Calu3 (cell line): ENCODE measurements at regions of chr4 and their contacts with region 1.

Region 1: DNA sequence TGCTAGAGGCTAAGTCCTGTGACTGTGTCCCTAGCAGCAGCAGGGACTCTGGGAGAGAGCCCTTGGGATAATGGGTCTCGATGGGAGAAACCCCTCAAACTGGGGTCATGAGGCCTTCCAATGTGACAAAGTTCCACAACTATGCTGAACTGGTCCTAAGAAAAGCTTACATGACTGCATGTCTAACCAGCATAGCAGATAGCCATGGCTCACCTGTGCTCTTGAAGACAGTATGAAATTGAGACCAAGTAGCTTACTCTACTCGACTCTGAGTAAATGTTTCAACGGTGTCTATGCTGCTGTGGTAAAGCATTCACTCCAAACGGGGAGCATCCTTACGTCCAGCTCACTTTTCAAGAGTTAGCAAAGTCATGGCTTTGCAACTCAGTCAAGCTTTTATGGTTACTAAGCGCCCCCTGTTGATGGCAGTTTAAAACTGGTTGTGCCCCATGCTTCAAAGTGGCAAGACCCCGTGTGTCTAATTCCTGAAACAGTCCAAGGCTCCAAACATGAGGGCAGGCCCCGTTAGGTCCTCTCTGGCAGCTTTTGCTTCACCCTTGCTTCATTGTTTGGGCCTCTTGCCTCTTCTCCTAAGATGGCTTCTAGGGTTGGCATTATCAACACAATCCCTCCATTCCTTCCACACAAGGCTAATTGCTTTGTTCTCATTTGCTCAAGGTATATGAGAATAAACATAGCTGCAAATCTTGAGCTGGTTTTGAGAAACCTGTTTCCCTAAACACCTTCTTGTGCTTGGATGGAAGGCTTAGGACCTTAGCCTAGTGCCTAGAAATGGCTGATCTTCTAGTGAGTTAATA is 46.6 kb downstream of the CCNG2 start:
- DNase-seq: peak; percentile 67
- H3K4me3 Mint-ChIP-seq: no peak overlapping the region
- H3K27ac Mint-ChIP-seq: no peak overlapping the region
- H3K4me1 Mint-ChIP-seq: peaks cover 18% of the 10 kb centered on the region
- H3K27me3 Mint-ChIP-seq: no peaks in the 10 kb centered on the region
- CTCF ChIP-seq: peak; percentile 36

Region 2: DNA sequence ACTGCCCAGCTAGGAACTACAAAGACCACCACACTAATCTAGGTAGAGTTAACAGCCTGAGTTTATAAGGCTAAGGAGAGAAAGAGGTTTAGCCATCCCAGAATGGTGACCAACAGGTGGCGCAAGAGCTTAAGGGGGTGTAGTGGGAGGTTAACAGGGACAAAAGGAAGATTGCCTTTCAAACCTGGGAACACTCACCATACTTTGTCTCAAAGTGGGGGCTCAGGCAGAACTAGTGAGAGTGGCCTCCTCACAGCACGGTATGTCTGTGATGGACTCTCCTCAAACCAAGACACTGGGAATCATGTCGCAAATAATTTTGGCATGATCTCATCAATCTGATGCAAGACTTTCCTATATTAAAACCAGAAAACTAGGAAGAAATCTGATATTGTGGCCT is 151.2 kb before region 1 on chr4:
- CTCF ChIA-PET with region 1: interaction called, 24 read pairs
- intact Hi-C with region 1: loop called (anchors 1 kb)
- DNase-seq: peak; percentile 71
- H3K4me3 Mint-ChIP-seq: no peak overlapping the region
- H3K27ac Mint-ChIP-seq: no peak overlapping the region
- H3K4me1 Mint-ChIP-seq: no peaks in the 10 kb centered on the region
- H3K27me3 Mint-ChIP-seq: no peaks in the 10 kb centered on the region
- CTCF ChIP-seq: peak; percentile 43

Region 3: DNA sequence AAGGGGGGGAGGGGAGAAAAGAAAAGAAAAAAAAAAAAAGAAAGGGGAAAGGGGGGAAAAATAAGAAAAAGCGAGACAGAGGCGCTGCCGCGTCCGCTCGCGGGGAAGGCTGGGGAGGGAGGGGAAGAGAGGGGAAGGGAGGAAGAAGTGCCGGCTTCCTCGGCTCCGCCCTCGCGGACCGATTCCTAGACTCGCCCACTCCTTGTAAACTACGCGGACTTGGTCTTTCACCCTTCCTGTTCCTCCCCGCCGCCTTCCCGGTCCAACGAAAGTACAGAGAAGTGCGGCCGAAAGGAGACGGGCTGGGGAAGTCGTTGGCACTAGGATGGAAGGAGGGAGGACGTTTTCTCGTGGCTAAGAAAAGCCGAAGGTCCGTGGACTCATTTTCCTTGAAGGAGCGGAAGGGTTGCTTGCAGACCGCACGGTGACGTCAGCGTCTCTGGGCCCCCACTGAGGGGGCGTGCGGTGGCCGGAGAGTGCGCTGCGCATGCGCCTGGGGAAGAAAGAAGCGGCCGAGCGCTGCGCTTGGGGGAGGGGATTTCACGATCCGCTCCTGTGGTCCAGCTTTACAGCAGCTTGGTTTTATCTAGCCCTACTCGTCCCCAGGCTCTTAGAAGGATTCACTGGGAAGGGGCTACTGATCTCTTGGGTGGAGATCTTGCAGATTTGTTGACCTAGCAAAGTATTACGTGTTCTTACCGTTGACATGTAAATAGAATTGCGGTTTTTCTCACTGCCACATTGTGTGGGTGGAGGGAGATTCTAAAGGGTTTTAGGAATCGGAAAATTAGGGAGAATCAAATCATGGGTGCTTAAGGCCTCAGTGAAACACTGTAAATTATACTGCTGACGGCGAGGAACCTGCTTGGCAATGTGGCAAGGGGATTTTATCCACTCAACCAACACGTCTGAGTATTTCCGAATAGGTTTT is 127.5 kb before region 1 on chr4 and contains the start of gene CCNI:
- CTCF ChIA-PET with region 1: interaction called, 15 read pairs
- intact Hi-C with region 1: no loop called
- DNase-seq: peak; percentile 91
- H3K4me3 Mint-ChIP-seq: no peak within 1 kb of the TSS
- H3K27ac Mint-ChIP-seq: no peak within 1 kb of the TSS
- H3K4me1 Mint-ChIP-seq: peaks cover 8% of the 10 kb centered on the region
- H3K27me3 Mint-ChIP-seq: no peaks in the 10 kb centered on the region
- CTCF ChIP-seq: no peak
- total RNA-seq, gene CCNI: 102 and 136 TPM in 2 replicates

Region 4: GRCh38 chr4:77095101-77095821 is 108.3 kb before region 1 on chr4:
- CTCF ChIA-PET with region 1: interaction called, 14 read pairs
- intact Hi-C with region 1: loop called (anchors 2 kb)
- DNase-seq: peak; percentile 66
- H3K4me3 Mint-ChIP-seq: peak overlapping the region; percentile 7
- H3K27ac Mint-ChIP-seq: peak overlapping the region; percentile 20
- H3K4me1 Mint-ChIP-seq: peaks cover 23% of the 10 kb centered on the region
- H3K27me3 Mint-ChIP-seq: no peaks in the 10 kb centered on the region
- CTCF ChIP-seq: peak; percentile 55

Region 5: DNA sequence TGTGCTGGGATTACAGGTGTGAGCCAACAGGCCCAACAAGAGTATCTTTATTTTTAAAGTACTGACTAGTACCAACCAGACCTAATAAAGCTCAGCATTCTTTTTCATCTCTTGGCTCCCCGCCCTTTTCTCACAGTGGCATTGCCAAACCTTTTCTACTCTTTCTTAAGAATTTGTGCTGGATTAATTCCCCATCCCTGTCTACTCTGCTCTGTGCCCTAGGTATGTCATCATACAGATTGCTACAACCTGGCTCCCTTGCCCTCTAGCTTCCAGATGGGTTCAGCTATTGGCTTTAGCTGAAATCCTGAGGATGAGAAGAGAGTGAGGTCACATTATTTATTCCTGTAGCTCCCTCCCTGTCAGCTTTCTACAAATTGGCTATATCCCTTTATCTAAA is 92.9 kb before region 1 on chr4:
- CTCF ChIA-PET with region 1: no interaction called
- intact Hi-C with region 1: no loop called
- DNase-seq: no peak
- H3K4me3 Mint-ChIP-seq: no peak overlapping the region
- H3K27ac Mint-ChIP-seq: no peak overlapping the region
- H3K4me1 Mint-ChIP-seq: no peaks in the 10 kb centered on the region
- H3K27me3 Mint-ChIP-seq: no peaks in the 10 kb centered on the region
- CTCF ChIP-seq: no peak

Region 6: GRCh38 chr4:77156533-77156911 is 47.1 kb before region 1 on chr4:
- CTCF ChIA-PET with region 1: no interaction called
- intact Hi-C with region 1: loop called (anchors 5 kb)
- DNase-seq: peak; percentile 91
- H3K4me3 Mint-ChIP-seq: peak overlapping the region; percentile 82
- H3K27ac Mint-ChIP-seq: peak overlapping the region; percentile 95
- H3K4me1 Mint-ChIP-seq: peaks cover 12% of the 10 kb centered on the region
- H3K27me3 Mint-ChIP-seq: no peaks in the 10 kb centered on the region
- CTCF ChIP-seq: no peak

Region 7: DNA sequence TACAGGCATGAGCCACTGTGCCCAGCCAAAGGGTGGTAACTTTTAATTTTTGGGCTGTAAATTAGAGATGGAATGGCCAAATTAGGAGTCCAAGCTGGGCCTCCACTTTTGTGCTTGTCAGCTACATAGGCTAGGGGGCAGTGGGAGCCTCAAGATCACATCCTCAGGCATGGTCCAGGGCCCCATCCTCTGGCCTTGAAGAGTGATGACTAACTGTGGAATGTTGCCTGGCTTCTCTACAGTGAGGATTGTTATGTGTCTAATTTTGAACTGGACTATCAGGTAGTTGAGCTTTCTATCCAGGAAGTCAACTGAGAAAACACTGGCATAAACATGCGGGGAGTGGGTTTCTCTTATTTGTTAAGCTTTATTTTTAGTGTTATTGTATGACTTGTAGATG is 13.5 kb before region 1 on chr4:
- CTCF ChIA-PET with region 1: interaction called, 19 read pairs
- intact Hi-C with region 1: no loop called
- DNase-seq: peak; percentile 37
- H3K4me3 Mint-ChIP-seq: no peak overlapping the region
- H3K27ac Mint-ChIP-seq: no peak overlapping the region
- H3K4me1 Mint-ChIP-seq: peaks cover 6% of the 10 kb centered on the region
- H3K27me3 Mint-ChIP-seq: peaks cover 12% of the 10 kb centered on the region
- CTCF ChIP-seq: no peak